ENCODE measurements at regions of chr17 and their contacts with region 1.

Region 1: DNA sequence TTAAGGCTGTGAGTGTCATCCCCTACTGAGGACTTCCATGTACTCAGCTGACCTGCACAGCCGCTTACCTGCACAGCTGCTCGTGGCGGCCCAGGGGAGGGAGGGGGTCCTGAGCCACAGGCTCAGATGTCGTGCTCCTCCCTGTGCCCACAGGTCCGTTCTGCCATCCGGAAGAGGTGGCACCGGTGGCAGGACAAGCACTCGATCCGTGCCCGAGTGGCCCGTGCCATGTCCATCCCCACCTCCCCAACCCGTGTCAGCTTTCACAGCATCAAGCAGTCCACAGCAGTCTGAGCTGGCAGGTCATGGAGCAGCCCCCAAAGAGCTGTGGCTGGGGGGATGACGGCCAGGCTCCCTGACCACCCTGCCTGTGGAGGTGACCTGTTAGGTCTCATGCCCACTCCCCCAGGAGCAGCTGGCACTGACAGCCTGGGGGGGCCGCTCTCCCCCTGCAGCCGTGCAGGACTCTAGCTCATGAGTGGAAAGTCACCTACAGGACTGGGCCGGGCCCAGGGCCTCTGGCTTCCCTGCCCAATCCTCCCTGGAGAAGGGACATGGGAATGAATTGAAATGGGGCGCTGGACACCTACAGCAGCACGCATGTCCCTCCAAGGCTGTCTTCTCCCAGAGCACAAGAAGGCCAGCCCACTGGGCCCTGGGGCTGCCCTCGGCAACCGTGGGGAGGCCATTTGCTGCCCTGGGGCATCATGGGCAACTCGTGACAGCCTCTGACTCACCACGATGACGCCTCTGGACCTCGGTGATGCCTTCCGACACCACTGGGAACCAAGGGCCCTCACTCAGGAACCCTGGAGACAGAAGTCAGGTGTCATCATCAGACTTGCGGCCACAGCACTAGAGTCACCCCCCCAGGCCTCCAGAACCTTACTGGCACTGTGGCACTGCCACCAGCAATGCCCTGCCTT is 9.9 kb upstream of the SPPL2C start:
- DNase-seq: no peak
- ATAC-seq: no peak
- H3K4me3 ChIP-seq: no peak overlapping the region
- H3K27ac ChIP-seq: no peak overlapping the region
- H3K4me1 ChIP-seq: no peaks in the 10 kb centered on the region
- H3K27me3 ChIP-seq: peaks cover 17% of the 10 kb centered on the region
- CTCF ChIP-seq: no peak

Region 2: DNA sequence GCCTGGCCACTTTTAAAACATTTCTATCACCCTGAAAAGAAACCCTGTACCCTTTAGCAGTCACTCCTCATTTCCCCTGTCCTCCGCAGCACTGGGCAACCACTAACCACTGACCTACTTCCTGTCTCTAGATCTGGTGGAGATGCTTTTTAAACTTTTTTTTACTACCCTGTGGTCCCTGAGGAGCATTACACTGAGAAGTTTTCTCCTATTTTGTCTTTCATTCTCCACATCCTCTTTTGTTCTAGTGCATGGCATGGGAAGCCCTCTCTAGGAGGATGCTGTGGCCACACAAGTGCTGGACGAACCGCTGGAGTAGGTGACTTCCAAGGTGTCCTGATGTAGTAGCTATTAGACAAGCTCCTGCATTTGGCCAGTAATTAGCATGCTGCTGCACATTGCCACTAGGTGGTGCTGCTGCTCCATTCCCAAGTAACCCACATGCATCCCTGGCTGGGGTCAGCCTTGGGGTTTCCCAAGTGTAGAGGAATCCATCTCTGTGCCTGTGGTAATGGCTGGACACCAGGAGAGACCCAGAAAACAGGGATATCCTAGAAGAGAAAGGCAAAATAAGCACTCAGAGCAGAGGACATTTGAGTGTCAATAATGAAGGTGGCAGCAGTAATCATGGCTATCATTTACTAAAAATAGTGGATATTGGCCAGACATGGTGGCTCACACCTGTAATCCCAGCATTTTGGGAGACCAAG is 194.4 kb before region 1 on chr17:
- intact Hi-C with region 1: loop called (anchors 10 kb)
- DNase-seq: peak; percentile 77
- ATAC-seq: peak; percentile 94
- H3K4me3 ChIP-seq: no peak overlapping the region
- H3K27ac ChIP-seq: no peak overlapping the region
- H3K4me1 ChIP-seq: no peaks in the 10 kb centered on the region
- H3K27me3 ChIP-seq: peaks cover 8% of the 10 kb centered on the region
- CTCF ChIP-seq: peak; percentile 98

Measured in upper lobe of right lung (tissue), 1 donor.